ENCODE measurements at regions of chr13 and their contacts with region 1.

Region 1: GRCh38 chr13:21670883-21671619 is at the start of gene FGF9:
- DNase-seq: peak; percentile 75
- ATAC-seq: peak; percentile 73
- H3K4me3 ChIP-seq: peak within 1 kb of the TSS; percentile 47 to 68
- H3K27ac ChIP-seq: peak within 1 kb of the TSS; percentile 67
- H3K4me1 ChIP-seq: peaks cover 30 to 59% of the 10 kb centered on the region in 2 experiments
- H3K27me3 ChIP-seq: peaks cover 23% of the 10 kb centered on the region; the same call in 1 of the 2 replicates
- CTCF ChIP-seq: peak in 1 of 3 experiments; percentile 9; a peak in 1 of 6 replicates
- POLR2A ChIP-seq: peak; percentile 49
- RAD21 ChIP-seq: no peak
- total RNA-seq, gene FGF9: 1.5 TPM

Region 2: GRCh38 chr13:21458813-21459701 is 212.0 kb before region 1 on chr13 and contains the start of gene ZDHHC20:
- CTCF ChIA-PET with region 1: no interaction called
- POLR2A ChIA-PET with region 1: no interaction called
- RAD21 ChIA-PET with region 1: no interaction called
- intact Hi-C with region 1: no loop called
- DNase-seq: no peak
- ATAC-seq: peak; percentile 93
- H3K4me3 ChIP-seq: peak within 1 kb of the TSS; percentile 83 to 94
- H3K27ac ChIP-seq: peak within 1 kb of the TSS; percentile 99
- H3K4me1 ChIP-seq: peaks cover 6 to 13% of the 10 kb centered on the region in 2 experiments; a peak in 3 of 4 replicates
- H3K27me3 ChIP-seq: no peaks in the 10 kb centered on the region
- CTCF ChIP-seq: no peak
- POLR2A ChIP-seq: peak; percentile 32
- RAD21 ChIP-seq: no peak
- total RNA-seq, gene ZDHHC20: 110 TPM

Region 3: DNA sequence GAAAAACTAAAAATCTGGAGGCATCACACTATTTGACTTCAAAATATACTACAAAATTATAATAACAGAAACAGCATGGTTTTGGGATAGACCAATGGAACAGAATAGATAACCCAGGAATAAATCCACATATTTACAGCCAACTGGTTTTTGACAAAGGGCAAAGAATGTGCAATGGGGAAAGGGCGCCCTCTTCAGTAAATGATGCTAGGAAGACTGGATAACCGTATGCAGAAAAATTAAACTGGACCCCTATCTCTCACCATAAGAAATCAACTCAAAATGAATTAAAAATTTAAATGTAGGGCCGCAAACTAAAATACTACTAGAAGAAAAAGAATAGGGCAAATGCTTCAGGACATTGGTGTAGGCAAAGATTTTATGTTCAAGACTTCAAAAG is 1069.2 kb after region 1 on chr13:
- CTCF ChIA-PET with region 1: no interaction called
- POLR2A ChIA-PET with region 1: no interaction called
- RAD21 ChIA-PET with region 1: no interaction called
- intact Hi-C with region 1: loop called (anchors 10 kb)
- DNase-seq: no peak
- ATAC-seq: no peak
- H3K4me3 ChIP-seq: no peak overlapping the region
- H3K27ac ChIP-seq: no peak overlapping the region
- H3K4me1 ChIP-seq: peaks cover 0 to 8% of the 10 kb centered on the region in 2 experiments; a peak in 3 of 4 replicates
- H3K27me3 ChIP-seq: no peaks in the 10 kb centered on the region
- CTCF ChIP-seq: peak; percentile 16 to 71 (median 64); a peak in 5 of 6 replicates
- POLR2A ChIP-seq: no peak
- RAD21 ChIP-seq: peak; percentile 46

Region 4: DNA sequence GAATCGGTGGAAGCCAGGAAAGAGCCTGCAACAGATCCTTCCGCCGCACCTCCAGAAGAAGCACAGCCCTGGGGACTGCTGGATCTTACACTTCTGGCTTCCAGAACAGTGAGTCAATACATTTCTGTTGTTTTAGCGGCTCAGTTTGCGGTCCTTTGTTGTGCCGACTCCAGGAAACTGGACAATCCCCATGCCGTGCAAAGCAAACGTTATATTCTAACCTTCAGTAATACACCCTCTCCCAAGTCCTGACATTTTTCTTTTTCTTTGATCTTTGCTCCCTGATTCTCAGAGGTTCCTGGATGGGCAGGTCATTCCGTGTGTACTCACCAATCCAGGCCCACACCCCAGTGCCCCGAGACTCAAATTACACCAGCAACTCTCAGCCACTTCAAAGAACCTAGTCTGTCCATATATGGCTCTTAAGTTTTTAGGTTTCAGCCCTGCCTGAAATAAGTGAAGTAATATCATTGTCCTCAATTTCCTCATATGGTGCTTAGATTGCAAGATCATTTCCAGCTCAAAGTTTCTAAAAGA is 1122.6 kb after region 1 on chr13:
- CTCF ChIA-PET with region 1: interaction called, 3 read pairs
- POLR2A ChIA-PET with region 1: no interaction called
- RAD21 ChIA-PET with region 1: no interaction called
- intact Hi-C with region 1: loop called (anchors 5 kb)
- DNase-seq: peak; percentile 84
- ATAC-seq: peak; percentile 78
- H3K4me3 ChIP-seq: peak overlapping the region; percentile 24 to 44
- H3K27ac ChIP-seq: peak overlapping the region; percentile 87
- H3K4me1 ChIP-seq: peaks cover 45 to 71% of the 10 kb centered on the region in 2 experiments
- H3K27me3 ChIP-seq: no peaks in the 10 kb centered on the region
- CTCF ChIP-seq: no peak
- POLR2A ChIP-seq: no peak
- RAD21 ChIP-seq: no peak

Measured in HCT116 (cell line).